CD4-positive, alpha-beta memory T cell (primary cell): ENCODE measurements at regions of chr6 and their contacts with region 1.

Region 1: DNA sequence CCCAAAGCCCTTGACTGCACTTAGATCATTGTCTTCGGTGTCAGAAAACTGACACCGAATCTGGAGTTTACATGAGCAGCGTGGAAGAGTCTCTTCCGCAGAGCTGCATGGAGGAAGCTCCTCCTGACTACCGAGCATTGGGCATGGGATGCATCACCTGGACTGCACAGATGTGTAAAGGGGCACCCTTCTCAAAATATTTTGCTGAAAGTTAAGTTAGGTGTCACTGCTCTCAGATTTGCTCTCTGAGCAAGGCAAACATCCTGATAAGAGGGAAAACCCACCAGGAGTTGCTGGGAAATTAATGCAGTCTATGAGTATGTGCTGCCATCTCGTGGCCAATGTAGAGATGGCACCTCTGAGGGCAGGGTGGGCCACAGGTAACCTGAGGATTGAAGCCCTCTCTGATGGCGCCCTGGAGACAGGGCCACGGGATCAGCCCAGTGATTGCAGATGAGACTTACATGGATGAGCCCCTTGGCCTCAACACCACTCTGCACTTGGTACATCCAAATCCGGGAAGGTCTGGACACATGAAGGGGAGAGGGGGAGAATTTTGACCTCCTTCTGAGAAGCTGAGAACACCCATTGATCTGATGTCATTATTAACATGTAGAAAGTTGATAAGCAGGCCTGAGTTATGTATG is 129.9 kb downstream of the LPA start:
- DNase-seq: peak; percentile 41 to 58 (median 45)
- H3K4me3 ChIP-seq: no peak overlapping the region
- H3K4me3 Mint-ChIP-seq: no peak overlapping the region
- H3K27ac ChIP-seq: no peak overlapping the region
- H3K27ac Mint-ChIP-seq: no peak overlapping the region
- H3K4me1 ChIP-seq: peaks cover 8% of the 10 kb centered on the region
- H3K4me1 Mint-ChIP-seq: no peaks in the 10 kb centered on the region
- H3K27me3 ChIP-seq: no peaks in the 10 kb centered on the region
- H3K27me3 Mint-ChIP-seq: peaks cover 0 to 2% of the 10 kb centered on the region in 2 donors

Region 2: DNA sequence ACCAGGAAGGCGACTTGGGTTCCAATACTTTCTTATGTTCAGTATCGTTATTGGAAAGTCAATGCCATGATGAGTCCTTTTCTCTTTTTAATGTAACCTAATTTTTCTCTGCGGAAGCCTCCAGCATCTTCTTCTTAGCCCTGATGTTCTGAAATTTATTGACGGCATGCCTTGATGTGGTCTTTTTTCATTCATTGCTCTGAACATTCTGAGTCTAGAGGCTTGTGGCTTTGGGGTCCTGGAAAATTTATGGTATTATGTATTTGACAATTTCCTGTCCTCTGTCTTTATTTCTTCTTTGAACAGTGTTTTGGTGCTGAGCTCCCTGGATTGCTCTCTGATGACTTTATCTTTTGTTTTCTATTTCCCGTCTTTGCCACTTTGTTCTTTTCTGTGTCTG is 672.1 kb before region 1 on chr6:
- CTCF ChIA-PET with region 1: interaction called, 11 read pairs
- POLR2A ChIA-PET with region 1: no interaction called
- intact Hi-C with region 1: loop called (anchors 2 kb)
- DNase-seq: peak in 4 of 5 donors; percentile 25 to 38 (median 32)
- H3K4me3 ChIP-seq: no peak overlapping the region
- H3K4me3 Mint-ChIP-seq: peak overlapping the region in 6 of 8 donors; percentile 1 to 53 (median 16)
- H3K27ac ChIP-seq: no peak overlapping the region
- H3K27ac Mint-ChIP-seq: peak overlapping the region; percentile 5 to 76 (median 62)
- H3K4me1 ChIP-seq: peaks cover 14% of the 10 kb centered on the region
- H3K4me1 Mint-ChIP-seq: peaks cover 10 to 17% (median 16%) of the 10 kb centered on the region in 4 donors
- H3K27me3 ChIP-seq: no peaks in the 10 kb centered on the region
- H3K27me3 Mint-ChIP-seq: peaks cover 7 to 8% of the 10 kb centered on the region in 2 donors

Region 3: DNA sequence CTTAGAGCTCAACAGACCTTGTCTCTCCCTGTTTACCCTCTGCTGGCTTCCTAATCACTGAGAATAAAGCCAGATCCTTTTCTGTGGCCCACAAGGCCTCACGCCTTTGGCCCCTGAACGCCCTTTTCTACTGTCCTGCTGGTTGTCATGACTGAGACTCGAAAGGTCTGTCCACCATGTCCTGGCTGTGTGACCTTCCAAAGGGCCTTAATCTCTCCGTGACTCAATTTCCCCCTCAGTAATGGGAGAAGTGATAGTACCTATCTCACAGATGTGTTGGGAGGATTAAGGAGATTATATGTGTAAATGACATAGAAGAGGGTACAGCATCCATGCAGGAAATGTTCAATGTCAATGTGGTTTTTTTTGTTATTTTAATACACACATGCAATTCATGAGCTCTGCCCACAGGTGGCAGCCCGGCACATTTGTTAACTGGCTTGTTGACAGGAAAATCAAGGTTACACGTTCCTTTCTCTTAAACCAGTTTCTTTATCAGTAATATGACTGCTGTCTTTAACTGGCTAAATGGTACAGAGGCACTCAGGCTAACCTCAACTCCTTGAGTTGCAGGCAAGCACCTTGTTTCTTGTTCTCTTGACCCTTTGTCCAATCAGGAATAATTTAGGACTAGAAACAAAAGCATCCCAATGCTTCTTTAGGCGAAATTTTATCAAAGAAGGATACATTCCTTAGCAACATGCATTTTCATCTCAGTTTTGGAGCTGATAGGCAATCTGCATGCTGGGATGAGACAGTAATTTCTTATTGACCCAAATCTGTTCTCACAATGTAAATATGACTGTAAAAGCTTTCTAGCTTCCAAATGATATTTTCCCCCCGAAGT is 396.0 kb before region 1 on chr6:
- CTCF ChIA-PET with region 1: interaction called, 40 read pairs
- POLR2A ChIA-PET with region 1: no interaction called
- intact Hi-C with region 1: loop called (anchors 1 kb)
- DNase-seq: peak; percentile 53 to 60 (median 58)
- H3K4me3 ChIP-seq: no peak overlapping the region
- H3K4me3 Mint-ChIP-seq: peak overlapping the region in 1 of 8 donors; percentile 3
- H3K27ac ChIP-seq: no peak overlapping the region
- H3K27ac Mint-ChIP-seq: no peak overlapping the region
- H3K4me1 ChIP-seq: no peaks in the 10 kb centered on the region
- H3K4me1 Mint-ChIP-seq: peaks cover 6 to 11% (median 7%) of the 10 kb centered on the region in 4 donors
- H3K27me3 ChIP-seq: no peaks in the 10 kb centered on the region
- H3K27me3 Mint-ChIP-seq: no peaks in the 10 kb centered on the region

Region 4: DNA sequence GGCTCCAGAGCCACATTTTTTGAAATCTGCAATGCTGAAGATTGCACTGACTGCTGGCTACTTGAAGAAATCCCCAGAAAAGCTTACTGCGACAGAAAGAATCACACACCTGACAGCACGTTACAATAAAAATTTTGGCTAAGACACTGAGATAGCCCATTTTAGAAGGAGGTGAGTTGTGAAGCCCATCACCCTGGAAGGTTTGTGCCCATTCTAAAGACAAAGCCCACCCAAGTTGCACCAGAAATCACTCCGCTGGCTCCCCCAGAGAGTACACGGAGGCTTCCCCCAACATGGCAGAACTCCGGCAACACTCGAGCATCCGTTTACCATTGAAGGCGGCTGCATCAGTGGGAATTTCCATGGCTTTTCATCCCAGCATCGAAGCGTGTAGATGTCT is 100.5 kb after region 1 on chr6:
- CTCF ChIA-PET with region 1: no interaction called
- POLR2A ChIA-PET with region 1: no interaction called
- intact Hi-C with region 1: no loop called
- DNase-seq: no peak
- H3K4me3 ChIP-seq: no peak overlapping the region
- H3K4me3 Mint-ChIP-seq: no peak overlapping the region
- H3K27ac ChIP-seq: no peak overlapping the region
- H3K27ac Mint-ChIP-seq: no peak overlapping the region
- H3K4me1 ChIP-seq: no peaks in the 10 kb centered on the region
- H3K4me1 Mint-ChIP-seq: no peaks in the 10 kb centered on the region
- H3K27me3 ChIP-seq: no peaks in the 10 kb centered on the region
- H3K27me3 Mint-ChIP-seq: peaks cover 2% of the 10 kb centered on the region in 2 donors